Head of caudate nucleus (tissue), 42 donors: ENCODE measurements at regions of chr6 and their contacts with region 1.

Region 1: DNA sequence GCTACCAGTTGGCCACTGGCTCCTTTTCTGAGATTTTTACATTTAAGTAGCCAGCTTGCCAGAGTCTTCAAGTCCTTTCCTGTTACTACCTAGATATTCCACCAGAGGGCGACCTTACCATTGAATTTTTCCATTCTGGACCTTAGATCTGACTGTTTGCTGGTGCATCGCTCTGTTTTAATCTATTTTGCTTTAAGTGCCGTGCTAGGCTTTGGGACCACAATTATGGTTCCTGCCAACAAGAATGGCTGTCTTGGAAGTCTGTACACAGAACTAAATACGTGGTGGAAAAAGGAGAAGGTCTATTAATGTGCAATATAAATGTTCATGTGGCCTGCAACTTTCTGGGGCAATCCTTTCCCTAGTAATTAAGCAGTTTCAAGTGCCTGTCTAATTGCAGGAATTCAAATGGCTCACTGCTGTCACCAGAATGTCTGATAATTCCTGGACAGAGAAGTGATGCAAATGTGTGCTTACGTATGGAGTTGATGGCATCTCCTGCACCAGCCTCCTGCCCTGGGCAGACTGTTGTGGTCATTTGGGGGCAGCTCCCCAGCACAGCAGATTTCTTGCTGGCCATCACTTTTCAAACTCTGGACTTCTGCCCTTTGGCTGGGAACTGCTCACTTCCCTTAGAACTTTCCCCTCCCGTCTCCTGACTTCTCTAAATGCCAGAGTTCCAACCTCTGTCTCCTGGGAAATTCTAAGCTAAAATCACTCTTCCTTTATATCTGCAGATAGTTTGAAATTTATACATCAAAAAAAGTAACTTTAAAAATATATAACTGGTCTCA is 5.6 kb upstream of the HLA-DOA start:
- DNase-seq: peak in 22 of 42 donors; percentile 5 to 84 (median 60)

Region 2: GRCh38 chr6:32868257-32868788 is 146.7 kb before region 1 on chr6:
- intact Hi-C with region 1: no loop called
- DNase-seq: peak; percentile 53 to 95 (median 84)

Region 3: DNA sequence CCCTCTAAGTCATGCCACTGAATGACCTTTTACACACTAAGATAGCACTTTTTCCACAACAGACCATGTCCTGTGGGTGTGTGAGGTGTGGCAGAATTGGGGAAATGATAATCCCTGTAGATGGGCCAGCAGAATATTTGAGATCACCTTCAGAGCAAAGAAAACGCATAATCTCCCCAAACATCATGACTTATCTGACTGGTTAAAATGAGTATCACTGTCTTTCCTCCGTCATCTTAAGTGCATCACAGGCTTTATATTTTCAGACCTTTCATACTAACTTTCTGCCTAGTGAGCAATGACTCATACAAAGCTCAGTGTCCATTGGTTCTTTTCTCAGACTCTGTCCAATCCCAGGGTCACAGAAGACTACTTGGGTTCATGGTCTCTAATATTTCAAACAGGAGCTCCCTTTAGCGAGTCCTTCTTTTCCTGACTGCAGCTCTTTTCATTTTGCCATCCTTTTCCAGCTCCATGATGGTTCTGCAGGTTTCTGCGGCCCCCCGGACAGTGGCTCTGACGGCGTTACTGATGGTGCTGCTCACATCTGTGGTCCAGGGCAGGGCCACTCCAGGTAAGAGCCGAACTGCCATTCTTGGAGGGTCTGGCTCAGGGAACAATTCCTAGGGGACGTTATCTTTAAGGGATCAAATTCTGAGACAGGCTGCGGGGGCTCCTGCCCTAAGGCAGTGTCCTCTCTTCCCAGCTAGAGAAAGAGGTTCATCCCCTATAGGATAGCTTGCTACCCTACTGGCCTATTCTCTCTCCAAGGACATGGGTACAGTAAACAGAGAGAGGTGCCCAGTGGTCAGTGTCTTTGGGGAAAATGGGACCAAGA is 60.7 kb after region 1 on chr6 and contains the start of gene HLA-DPB1:
- intact Hi-C with region 1: loop called (anchors 10 kb)
- DNase-seq: peak in 5 of 42 donors; percentile 10 to 50 (median 19)

Region 4: DNA sequence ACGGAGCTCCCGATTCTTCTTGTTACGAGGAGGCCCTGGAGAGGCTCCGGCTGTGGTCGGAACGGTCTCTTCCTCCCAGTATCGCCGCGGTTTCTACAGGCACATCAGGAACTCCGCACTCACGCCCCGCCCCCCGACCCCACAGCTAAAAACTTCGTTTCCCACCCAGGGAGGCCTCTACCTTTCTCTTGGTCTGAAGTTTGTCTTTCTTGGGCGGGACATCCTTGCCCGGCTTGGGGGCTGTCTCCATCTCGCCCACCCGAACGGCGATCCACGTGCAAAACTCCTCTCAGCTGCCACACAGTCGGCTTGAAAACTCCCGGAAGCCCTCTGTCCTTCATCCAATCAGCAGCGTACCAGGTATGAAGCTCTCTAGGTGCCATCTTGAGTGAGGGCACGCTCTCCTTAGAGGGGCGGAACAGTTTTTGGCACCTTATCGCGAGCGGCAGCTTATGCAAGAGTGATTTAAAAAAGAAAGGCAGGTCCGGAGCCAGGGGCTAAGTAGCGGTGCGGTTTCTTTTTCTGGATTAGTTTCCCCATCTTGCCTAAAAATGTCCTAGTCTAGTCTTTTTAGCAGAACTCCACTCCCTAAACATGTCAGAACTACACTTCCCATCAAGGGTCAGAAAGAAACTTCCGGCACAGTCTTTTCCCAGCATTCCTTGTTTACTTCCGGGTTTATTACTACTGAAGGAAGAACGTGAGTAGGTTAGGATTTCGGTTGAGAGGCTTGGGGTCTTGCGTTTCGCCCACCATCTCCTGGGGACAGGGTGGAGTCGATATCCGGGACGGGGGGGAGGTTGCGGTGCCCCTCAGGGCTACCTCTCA is 274.1 kb after region 1 on chr6 and contains the starts of genes PFDN6 and WDR46:
- intact Hi-C with region 1: no loop called
- DNase-seq: peak; percentile 71 to 96 (median 90)